ENCODE measurements at regions of chr22 and their contacts with region 1.

Region 1: GRCh38 chr22:31290494-31291471 is 1.5 kb downstream of the PIK3IP1 start:
- DNase-seq: peak; percentile 98
- H3K4me3 ChIP-seq: peak overlapping the region; percentile 62 to 82 (median 72)
- H3K27ac ChIP-seq: peak overlapping the region; percentile 95 to 99 (median 98)
- H3K4me1 ChIP-seq: peaks cover 21 to 76% (median 36%) of the 10 kb centered on the region in 4 donors
- H3K27me3 ChIP-seq: no peaks in the 10 kb centered on the region
- CTCF ChIP-seq: no peak
- EP300 ChIP-seq: no peak
- POLR2A ChIP-seq: peak; percentile 98

Region 2: GRCh38 chr22:29431986-29432385 is 1858.8 kb before region 1 on chr22:
- in situ Hi-C with region 1: no loop called
- intact Hi-C with region 1: loop called (anchors 10 kb)
- DNase-seq: no peak
- H3K4me3 ChIP-seq: no peak overlapping the region
- H3K27ac ChIP-seq: no peak overlapping the region
- H3K4me1 ChIP-seq: no peaks in the 10 kb centered on the region
- H3K27me3 ChIP-seq: peaks cover 39% of the 10 kb centered on the region
- CTCF ChIP-seq: no peak
- EP300 ChIP-seq: no peak
- POLR2A ChIP-seq: no peak

Region 3: DNA sequence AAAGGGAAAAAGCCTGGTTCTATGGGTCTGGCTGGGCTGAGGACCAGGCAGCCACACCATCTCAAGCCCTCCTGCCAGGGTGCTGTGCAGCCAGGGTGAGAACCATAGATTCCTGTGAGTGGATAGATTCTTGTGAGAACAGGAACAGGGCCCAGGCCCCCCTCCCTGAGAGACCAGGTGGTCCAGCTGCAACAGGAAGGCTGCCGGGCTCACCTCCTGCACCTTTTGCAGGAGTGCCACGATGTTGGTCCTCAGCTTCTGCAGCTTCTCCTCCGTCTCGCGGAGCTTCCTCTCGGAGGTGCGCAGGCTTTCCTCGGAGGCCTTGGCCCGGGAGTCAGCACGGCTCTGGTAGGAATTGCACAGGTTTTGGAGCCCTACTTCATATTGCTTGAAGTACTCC is 363.0 kb before region 1 on chr22:
- in situ Hi-C with region 1: no loop called
- intact Hi-C with region 1: no loop called
- DNase-seq: no peak
- H3K4me3 ChIP-seq: no peak overlapping the region
- H3K27ac ChIP-seq: no peak overlapping the region
- H3K4me1 ChIP-seq: no peaks in the 10 kb centered on the region
- H3K27me3 ChIP-seq: no peaks in the 10 kb centered on the region
- CTCF ChIP-seq: no peak
- EP300 ChIP-seq: no peak
- POLR2A ChIP-seq: no peak